Caco-2 (cell line): ENCODE measurements at regions of chr1 and their contacts with region 1.

Region 1: DNA sequence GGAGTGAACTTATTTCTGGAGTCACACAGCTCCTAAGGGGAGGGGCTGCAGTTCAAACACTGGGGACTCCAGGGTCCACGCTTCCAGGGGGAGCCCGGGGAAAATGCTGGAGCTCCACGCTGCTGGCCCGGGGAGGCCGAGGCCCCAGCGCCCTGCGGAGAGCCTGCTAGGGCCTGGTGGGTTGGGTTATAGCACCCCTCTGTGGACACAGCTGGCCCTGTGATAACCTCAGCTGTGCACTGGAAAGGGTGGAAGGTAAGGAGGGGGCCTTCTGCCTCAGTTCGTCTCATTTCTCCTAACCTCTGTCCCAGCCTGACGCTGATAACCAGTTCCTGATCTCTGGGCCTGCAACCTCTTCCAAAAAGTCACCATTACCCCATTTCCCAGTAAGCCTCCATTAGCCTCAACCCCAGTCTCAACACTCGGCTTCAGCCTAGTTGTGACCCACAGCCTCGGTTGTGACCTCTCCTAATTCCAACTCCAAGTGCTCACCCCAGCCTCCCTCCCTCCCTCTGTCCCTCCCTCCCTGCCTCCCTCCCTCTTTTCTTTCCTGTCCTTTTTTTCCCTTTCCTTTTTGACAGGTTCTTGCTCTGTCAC is 7.1 kb downstream of the NBL1 start:
- DNase-seq: peak; percentile 47 to 62
- H3K4me3 ChIP-seq: no peak overlapping the region
- H3K4me3 Mint-ChIP-seq: no peak overlapping the region
- H3K27ac Mint-ChIP-seq: no peak overlapping the region
- H3K4me1 ChIP-seq: no peaks in the 10 kb centered on the region
- H3K4me1 Mint-ChIP-seq: no peaks in the 10 kb centered on the region
- H3K27me3 ChIP-seq: no peaks in the 10 kb centered on the region
- H3K27me3 Mint-ChIP-seq: no peaks in the 10 kb centered on the region
- CTCF ChIP-seq: peak; percentile 42 to 59

Region 2: GRCh38 chr1:19341201-19342072 is 309.8 kb before region 1 on chr1:
- CTCF ChIA-PET with region 1: interaction called, 4 read pairs
- POLR2A ChIA-PET with region 1: no interaction called
- intact Hi-C with region 1: loop called (anchors 2 kb)
- DNase-seq: peak; percentile 62 to 75
- H3K4me3 ChIP-seq: no peak overlapping the region
- H3K4me3 Mint-ChIP-seq: no peak overlapping the region
- H3K27ac Mint-ChIP-seq: no peak overlapping the region
- H3K4me1 ChIP-seq: peaks cover 3% of the 10 kb centered on the region; the same call in 1 of the 2 replicates
- H3K4me1 Mint-ChIP-seq: peaks cover 6% of the 10 kb centered on the region
- H3K27me3 ChIP-seq: no peaks in the 10 kb centered on the region
- H3K27me3 Mint-ChIP-seq: no peaks in the 10 kb centered on the region
- CTCF ChIP-seq: peak; percentile 63 to 71

Region 3: GRCh38 chr1:19390901-19391595 is 260.2 kb before region 1 on chr1:
- CTCF ChIA-PET with region 1: interaction called, 5 read pairs
- POLR2A ChIA-PET with region 1: no interaction called
- intact Hi-C with region 1: loop called (anchors 1 kb)
- DNase-seq: peak in 1 of 2 experiments; percentile 35
- H3K4me3 ChIP-seq: no peak overlapping the region
- H3K4me3 Mint-ChIP-seq: no peak overlapping the region
- H3K27ac Mint-ChIP-seq: peak overlapping the region; percentile 20
- H3K4me1 ChIP-seq: peaks cover 25% of the 10 kb centered on the region
- H3K4me1 Mint-ChIP-seq: peaks cover 9% of the 10 kb centered on the region
- H3K27me3 ChIP-seq: no peaks in the 10 kb centered on the region
- H3K27me3 Mint-ChIP-seq: no peaks in the 10 kb centered on the region
- CTCF ChIP-seq: peak; percentile 59 to 76

Region 4: GRCh38 chr1:19448491-19449439 is 202.5 kb before region 1 on chr1:
- CTCF ChIA-PET with region 1: interaction called, 6 read pairs
- POLR2A ChIA-PET with region 1: no interaction called
- intact Hi-C with region 1: loop called (anchors 5 kb)
- DNase-seq: no peak
- H3K4me3 ChIP-seq: no peak overlapping the region
- H3K4me3 Mint-ChIP-seq: no peak overlapping the region
- H3K27ac Mint-ChIP-seq: peak overlapping the region; percentile 73
- H3K4me1 ChIP-seq: peaks cover 19% of the 10 kb centered on the region
- H3K4me1 Mint-ChIP-seq: peaks cover 28% of the 10 kb centered on the region
- H3K27me3 ChIP-seq: no peaks in the 10 kb centered on the region
- H3K27me3 Mint-ChIP-seq: no peaks in the 10 kb centered on the region
- CTCF ChIP-seq: no peak

Region 5: GRCh38 chr1:19682257-19682656 is 31.0 kb after region 1 on chr1:
- CTCF ChIA-PET with region 1: no interaction called
- POLR2A ChIA-PET with region 1: no interaction called
- intact Hi-C with region 1: no loop called
- DNase-seq: no peak
- H3K4me3 ChIP-seq: no peak overlapping the region
- H3K4me3 Mint-ChIP-seq: no peak overlapping the region
- H3K27ac Mint-ChIP-seq: no peak overlapping the region
- H3K4me1 ChIP-seq: no peaks in the 10 kb centered on the region
- H3K4me1 Mint-ChIP-seq: no peaks in the 10 kb centered on the region
- H3K27me3 ChIP-seq: no peaks in the 10 kb centered on the region
- H3K27me3 Mint-ChIP-seq: no peaks in the 10 kb centered on the region
- CTCF ChIP-seq: no peak

Region 6: GRCh38 chr1:20124456-20125057 is 473.3 kb after region 1 on chr1:
- CTCF ChIA-PET with region 1: no interaction called
- POLR2A ChIA-PET with region 1: no interaction called
- intact Hi-C with region 1: no loop called
- DNase-seq: no peak
- H3K4me3 ChIP-seq: no peak overlapping the region
- H3K4me3 Mint-ChIP-seq: no peak overlapping the region
- H3K27ac Mint-ChIP-seq: no peak overlapping the region
- H3K4me1 ChIP-seq: no peaks in the 10 kb centered on the region
- H3K4me1 Mint-ChIP-seq: no peaks in the 10 kb centered on the region
- H3K27me3 ChIP-seq: no peaks in the 10 kb centered on the region
- H3K27me3 Mint-ChIP-seq: peaks cover 3% of the 10 kb centered on the region
- CTCF ChIP-seq: no peak